Activated T-helper 1 cell treated with anti-CD3 and anti-CD28 coated beads, Interleukin-12 subunit alpha, Interleukin-12 subunit beta, Interleukin-2, Interleukin-4 antibody, amounts not matched to agents 30 ng/mL and 10 ng/mL and 1 ng/mL, durations not matched to agents 14 hours and 24 hours and 36 hours (primary cell): ENCODE measurements at regions of chr7 and their contacts with region 1.

Region 1: GRCh38 chr7:132666071-132666774 is 90.0 kb upstream of the PLXNA4 start:
- DNase-seq: peak; percentile 6
- H3K4me3 Mint-ChIP-seq: peak overlapping the region; percentile 20
- H3K27ac Mint-ChIP-seq: peak overlapping the region; percentile 2
- H3K4me1 Mint-ChIP-seq: peaks cover 11% of the 10 kb centered on the region
- H3K27me3 Mint-ChIP-seq: no peaks in the 10 kb centered on the region

Region 2: DNA sequence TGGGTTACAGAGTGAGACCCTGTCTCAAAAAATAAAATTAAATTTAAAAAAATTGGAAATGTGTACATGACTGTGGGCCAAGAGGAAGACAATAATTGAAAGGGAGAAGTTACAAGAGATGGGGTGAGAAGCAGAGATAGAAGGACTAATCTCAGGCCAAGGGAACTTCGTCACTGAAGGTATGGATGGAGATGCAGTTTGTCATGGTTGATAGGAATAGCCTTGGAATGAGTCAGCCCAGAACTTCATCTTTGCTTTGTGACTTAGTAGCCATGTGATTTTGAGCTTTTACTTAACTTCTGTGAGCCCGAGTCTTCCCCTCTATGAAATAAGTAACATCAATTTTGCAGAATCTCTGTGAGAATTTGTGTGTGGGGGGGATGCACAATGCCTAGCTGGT is 1103.3 kb before region 1 on chr7:
- intact Hi-C with region 1: no loop called
- DNase-seq: no peak
- H3K4me3 Mint-ChIP-seq: no peak overlapping the region
- H3K27ac Mint-ChIP-seq: no peak overlapping the region
- H3K4me1 Mint-ChIP-seq: no peaks in the 10 kb centered on the region
- H3K27me3 Mint-ChIP-seq: peaks cover 26% of the 10 kb centered on the region

Region 3: GRCh38 chr7:131591687-131592319 is 1074.4 kb before region 1 on chr7:
- intact Hi-C with region 1: no loop called
- DNase-seq: no peak
- H3K4me3 Mint-ChIP-seq: no peak overlapping the region
- H3K27ac Mint-ChIP-seq: no peak overlapping the region
- H3K4me1 Mint-ChIP-seq: no peaks in the 10 kb centered on the region
- H3K27me3 Mint-ChIP-seq: peaks cover 5% of the 10 kb centered on the region

Region 4: GRCh38 chr7:132654150-132654549 is 12.1 kb before region 1 on chr7:
- intact Hi-C with region 1: loop called (anchors 1 kb)
- DNase-seq: no peak
- H3K4me3 Mint-ChIP-seq: peak overlapping the region; percentile 45
- H3K27ac Mint-ChIP-seq: peak overlapping the region; percentile 75
- H3K4me1 Mint-ChIP-seq: peaks cover 39% of the 10 kb centered on the region
- H3K27me3 Mint-ChIP-seq: peaks cover 4% of the 10 kb centered on the region

Region 5: GRCh38 chr7:132705146-132705545 is 38.9 kb after region 1 on chr7:
- intact Hi-C with region 1: no loop called
- DNase-seq: no peak
- H3K4me3 Mint-ChIP-seq: no peak overlapping the region
- H3K27ac Mint-ChIP-seq: no peak overlapping the region
- H3K4me1 Mint-ChIP-seq: no peaks in the 10 kb centered on the region
- H3K27me3 Mint-ChIP-seq: no peaks in the 10 kb centered on the region

Region 6: GRCh38 chr7:133997463-133997862 is 1331.2 kb after region 1 on chr7:
- intact Hi-C with region 1: no loop called
- DNase-seq: no peak
- H3K4me3 Mint-ChIP-seq: no peak overlapping the region
- H3K27ac Mint-ChIP-seq: no peak overlapping the region
- H3K4me1 Mint-ChIP-seq: no peaks in the 10 kb centered on the region
- H3K27me3 Mint-ChIP-seq: no peaks in the 10 kb centered on the region